ENCODE measurements at regions of chr7 and their contacts with region 1.

Region 1: DNA sequence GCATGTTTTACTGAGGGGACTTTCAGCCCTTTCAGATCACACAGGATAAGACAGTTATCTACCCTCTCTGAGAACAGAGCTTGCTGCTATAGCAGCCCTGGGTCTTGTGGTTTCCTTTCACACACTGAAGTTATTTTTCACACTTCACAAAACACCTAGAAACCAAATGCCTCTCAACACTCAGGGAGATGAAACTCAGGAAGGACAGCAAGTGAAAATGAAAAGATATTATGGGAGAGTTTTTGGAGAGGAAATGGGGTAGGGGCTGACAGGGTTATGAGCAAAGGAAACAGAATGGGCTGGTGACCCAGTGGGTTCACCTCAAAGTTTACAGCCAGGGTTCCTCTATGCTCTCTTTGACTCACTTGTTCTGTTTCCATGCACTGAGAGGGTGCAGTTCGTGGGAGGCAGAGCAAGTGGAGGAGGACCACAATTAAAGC is 17.0 kb upstream of the GIMAP2 start:
- DNase-seq: peak; percentile 74
- H3K4me3 Mint-ChIP-seq: peak overlapping the region; percentile 74
- H3K27ac Mint-ChIP-seq: peak overlapping the region; percentile 91
- H3K4me1 Mint-ChIP-seq: peaks cover 94% of the 10 kb centered on the region
- H3K27me3 Mint-ChIP-seq: no peaks in the 10 kb centered on the region

Region 2: DNA sequence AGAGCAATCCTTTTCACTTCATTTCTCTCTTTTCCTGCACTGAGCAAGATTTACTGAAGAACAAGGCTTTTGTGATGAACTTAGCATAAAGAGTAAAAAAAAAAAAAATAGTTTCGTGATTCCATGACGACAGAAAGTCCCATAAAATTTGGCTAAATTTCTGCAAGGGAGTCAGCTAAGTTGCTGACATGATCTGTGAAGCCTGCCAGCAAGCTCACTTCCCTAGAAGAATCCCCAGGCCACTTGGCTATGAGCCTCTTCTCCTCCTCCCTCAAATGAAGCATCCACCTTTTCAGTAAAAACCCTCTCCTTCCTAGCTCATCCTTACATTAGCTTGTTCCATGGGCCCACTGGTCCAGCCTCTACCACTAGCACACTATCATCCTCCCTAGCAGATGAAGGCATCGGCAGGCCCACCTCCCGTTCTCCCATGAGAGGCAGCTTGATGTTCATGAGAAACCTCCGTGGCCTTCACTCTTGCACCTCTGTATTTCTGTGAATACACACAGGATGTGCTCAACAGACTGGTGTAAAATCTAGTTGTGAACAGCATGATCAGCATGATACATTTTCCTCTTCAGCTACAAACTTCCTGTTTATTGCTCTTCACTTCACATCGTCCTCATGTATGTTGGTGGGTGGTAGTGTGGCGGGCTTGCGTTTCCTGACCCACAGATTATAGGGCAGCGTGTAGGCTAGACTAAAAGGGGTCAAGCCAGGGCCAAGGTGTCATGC is 187.1 kb before region 1 on chr7:
- intact Hi-C with region 1: loop called (anchors 1 kb)
- DNase-seq: peak; percentile 60
- H3K4me3 Mint-ChIP-seq: peak overlapping the region; percentile 88
- H3K27ac Mint-ChIP-seq: peak overlapping the region; percentile 100
- H3K4me1 Mint-ChIP-seq: peaks cover 96% of the 10 kb centered on the region
- H3K27me3 Mint-ChIP-seq: no peaks in the 10 kb centered on the region

Region 3: GRCh38 chr7:150514748-150515222 is 153.7 kb before region 1 on chr7 and contains the start of gene GIMAP7:
- intact Hi-C with region 1: loop called (anchors 2 kb)
- DNase-seq: peak; percentile 68
- H3K4me3 Mint-ChIP-seq: peak within 1 kb of the TSS; percentile 96
- H3K27ac Mint-ChIP-seq: peak within 1 kb of the TSS; percentile 98
- H3K4me1 Mint-ChIP-seq: peaks cover 65% of the 10 kb centered on the region
- H3K27me3 Mint-ChIP-seq: no peaks in the 10 kb centered on the region
- total RNA-seq, gene GIMAP7: 46.9 and 55.1 TPM in 2 replicates

Region 4: GRCh38 chr7:150620617-150621371 is 47.7 kb before region 1 on chr7:
- intact Hi-C with region 1: loop called (anchors 1 kb)
- DNase-seq: no peak
- H3K4me3 Mint-ChIP-seq: peak overlapping the region; percentile 57
- H3K27ac Mint-ChIP-seq: peak overlapping the region; percentile 86
- H3K4me1 Mint-ChIP-seq: peaks cover 63% of the 10 kb centered on the region
- H3K27me3 Mint-ChIP-seq: no peaks in the 10 kb centered on the region

Region 5: GRCh38 chr7:150685219-150686029 is 16.9 kb after region 1 on chr7 and contains the start of gene GIMAP2:
- intact Hi-C with region 1: loop called (anchors 1 kb)
- DNase-seq: peak; percentile 39
- H3K4me3 Mint-ChIP-seq: peak within 1 kb of the TSS; percentile 93
- H3K27ac Mint-ChIP-seq: peak within 1 kb of the TSS; percentile 98
- H3K4me1 Mint-ChIP-seq: peaks cover 87% of the 10 kb centered on the region
- H3K27me3 Mint-ChIP-seq: no peaks in the 10 kb centered on the region
- total RNA-seq, gene GIMAP2: 24.7 and 29.7 TPM in 2 replicates

Region 6: DNA sequence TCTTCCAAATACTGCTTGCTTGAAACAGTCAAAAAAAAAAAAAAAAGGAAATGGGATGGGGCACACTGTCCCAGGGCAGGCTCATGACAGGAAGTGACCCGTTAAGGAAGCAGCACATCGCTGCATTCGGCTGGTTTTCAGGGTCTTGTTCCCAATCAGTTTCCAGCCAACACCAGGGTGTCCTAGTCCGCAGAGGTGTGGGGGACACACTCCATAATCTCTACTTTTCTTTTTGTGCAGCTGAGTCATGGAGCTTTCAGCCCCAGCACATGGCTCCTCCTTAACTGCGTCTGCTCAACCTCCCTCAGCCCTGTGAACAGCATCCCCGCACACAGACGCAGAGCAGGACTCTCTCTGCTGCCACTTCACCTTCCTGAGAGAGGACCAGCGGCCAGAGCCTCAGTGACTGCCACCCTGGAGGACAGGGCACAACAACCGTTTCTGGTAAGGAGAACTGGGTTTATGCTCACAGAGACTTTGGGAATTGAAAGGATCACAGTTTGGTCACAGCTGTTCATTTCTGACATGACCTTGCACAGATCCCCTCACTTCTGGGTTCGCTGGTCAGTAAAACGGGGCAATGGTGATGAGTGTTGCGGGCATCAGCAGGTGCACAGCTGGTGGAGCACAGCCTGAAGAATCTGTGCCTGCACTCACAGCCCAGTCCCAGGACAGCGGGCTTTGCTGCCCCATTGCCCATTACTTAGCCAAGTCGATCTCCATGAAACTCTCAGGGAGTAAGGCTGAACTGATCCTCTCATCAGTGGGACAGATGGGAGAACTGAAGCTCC is 69.0 kb after region 1 on chr7 and contains the start of gene GIMAP5:
- intact Hi-C with region 1: loop called (anchors 1 kb)
- DNase-seq: peak; percentile 51
- H3K4me3 Mint-ChIP-seq: peak within 1 kb of the TSS; percentile 97
- H3K27ac Mint-ChIP-seq: peak within 1 kb of the TSS; percentile 99
- H3K4me1 Mint-ChIP-seq: peaks cover 88% of the 10 kb centered on the region
- H3K27me3 Mint-ChIP-seq: no peaks in the 10 kb centered on the region
- total RNA-seq, gene GIMAP5: 53.8 and 59.7 TPM in 2 replicates

Measured in activated T-helper 1 cell treated with anti-CD3 and anti-CD28 coated beads, Interleukin-12 subunit alpha, Interleukin-12 subunit beta, Interleukin-2, Interleukin-4 antibody, amounts not matched to agents 30 ng/mL and 10 ng/mL and 1 ng/mL, durations not matched to agents 14 hours and 24 hours and 36 hours (primary cell).